ENCODE measurements at regions of chr14 and their contacts with region 1.

Region 1: DNA sequence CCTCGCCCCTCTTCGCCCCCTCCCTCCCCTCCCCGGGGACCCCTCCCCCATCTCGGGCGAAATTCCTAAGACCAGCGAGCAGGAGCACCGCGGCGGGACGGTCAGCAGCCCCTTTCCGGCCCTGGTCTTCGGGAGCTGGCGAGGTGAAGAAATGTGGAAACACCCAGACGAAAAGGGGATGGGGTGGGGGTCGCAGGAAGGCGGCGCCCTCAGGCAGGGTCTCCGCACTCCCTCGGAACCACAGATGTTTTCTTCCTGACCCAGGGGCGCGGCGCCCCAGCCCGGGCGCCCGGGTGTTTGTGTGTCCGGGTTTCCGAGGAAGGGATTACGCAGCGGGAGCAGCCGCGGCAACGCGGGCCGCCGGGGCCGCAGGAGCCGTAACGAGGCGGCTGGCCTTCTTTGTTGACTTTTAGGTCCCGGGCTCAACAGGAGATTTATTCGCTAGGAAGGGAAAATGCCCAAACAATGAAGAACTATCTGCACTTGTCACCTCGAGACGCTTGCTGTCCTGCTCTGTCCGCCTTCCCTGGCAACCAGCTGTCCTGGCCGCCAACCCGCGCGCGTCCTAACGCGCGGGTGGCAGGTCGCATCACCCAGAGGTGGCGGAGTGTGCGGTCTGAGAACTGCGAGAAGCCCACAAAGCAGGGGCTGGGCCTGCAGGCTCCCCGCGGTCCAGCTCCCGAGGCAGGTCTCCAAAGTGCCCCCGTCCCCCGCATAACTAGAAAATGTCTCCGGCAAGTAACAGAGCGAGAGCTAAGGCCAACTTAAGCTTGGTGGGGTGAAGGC is 7.0 kb downstream of the FOXA1 start:
- DNase-seq: peak in 2 of 3 donors; percentile 36 to 58
- ATAC-seq: no peak
- H3K4me3 ChIP-seq: peak overlapping the region; percentile 14
- H3K4me1 ChIP-seq: peaks cover 9% of the 10 kb centered on the region
- CTCF ChIP-seq: no peak

Region 2: DNA sequence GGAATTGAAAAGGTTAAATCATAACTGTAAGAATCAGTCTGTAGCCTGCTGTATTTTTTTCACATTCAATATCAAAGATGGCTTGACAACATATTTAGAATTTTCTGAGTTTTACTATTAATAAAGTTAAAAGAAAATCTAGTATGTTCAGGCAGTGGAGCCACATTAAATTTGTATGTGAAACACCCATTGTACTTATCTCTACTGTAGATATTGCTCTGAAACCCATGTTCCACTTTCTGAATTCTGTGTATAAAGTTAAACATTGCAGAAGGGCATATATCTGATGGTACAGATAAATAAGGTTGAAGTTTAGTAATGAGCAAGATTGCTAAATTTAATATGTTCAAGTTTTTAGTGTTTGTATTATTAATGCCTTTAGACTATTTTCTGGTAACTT is 165.8 kb before region 1 on chr14:
- intact Hi-C with region 1: loop called in 1 of 2 experiments (anchors 5 kb)
- DNase-seq: no peak
- ATAC-seq: no peak
- H3K4me3 ChIP-seq: no peak overlapping the region
- H3K4me1 ChIP-seq: peaks cover 10% of the 10 kb centered on the region
- CTCF ChIP-seq: no peak